ENCODE measurements at regions of chr22 and their contacts with region 1.

Region 1: GRCh38 chr22:28800308-28801077 is at the start of gene XBP1:
- DNase-seq: peak; percentile 87 to 93 (median 91)
- H3K4me3 ChIP-seq: peak within 1 kb of the TSS; percentile 83 to 92
- H3K4me3 Mint-ChIP-seq: peak within 1 kb of the TSS; percentile 89 to 99 (median 96)
- H3K27ac ChIP-seq: peak within 1 kb of the TSS; percentile 96
- H3K27ac Mint-ChIP-seq: peak within 1 kb of the TSS; percentile 89 to 100 (median 100)
- H3K4me1 ChIP-seq: peaks cover 53% of the 10 kb centered on the region
- H3K4me1 Mint-ChIP-seq: peaks cover 33 to 81% (median 49%) of the 10 kb centered on the region in 4 donors
- H3K27me3 ChIP-seq: no peaks in the 10 kb centered on the region
- H3K27me3 Mint-ChIP-seq: no peaks in the 10 kb centered on the region
- total RNA-seq, gene XBP1: 154 to 164 TPM

Region 2: GRCh38 chr22:28241656-28242290 is 558.7 kb before region 1 on chr22:
- CTCF ChIA-PET with region 1: no interaction called
- POLR2A ChIA-PET with region 1: no interaction called
- intact Hi-C with region 1: no loop called
- DNase-seq: no peak
- H3K4me3 ChIP-seq: no peak overlapping the region
- H3K4me3 Mint-ChIP-seq: no peak overlapping the region
- H3K27ac ChIP-seq: no peak overlapping the region
- H3K27ac Mint-ChIP-seq: no peak overlapping the region
- H3K4me1 ChIP-seq: no peaks in the 10 kb centered on the region
- H3K4me1 Mint-ChIP-seq: peaks cover 0 to 1% (median 0%) of the 10 kb centered on the region in 4 donors
- H3K27me3 ChIP-seq: no peaks in the 10 kb centered on the region
- H3K27me3 Mint-ChIP-seq: peaks cover 10 to 13% of the 10 kb centered on the region in 2 donors

Region 3: GRCh38 chr22:28741758-28742561 is 58.5 kb before region 1 on chr22 and contains the starts of genes CHEK2 and HSCB:
- CTCF ChIA-PET with region 1: no interaction called
- POLR2A ChIA-PET with region 1: interaction called, 30 read pairs
- intact Hi-C with region 1: loop called (anchors 1 kb)
- DNase-seq: peak; percentile 95 to 99 (median 96)
- H3K4me3 ChIP-seq: peak within 1 kb of the TSS; percentile 91 to 98
- H3K4me3 Mint-ChIP-seq: peak within 1 kb of the TSS; percentile 85 to 99 (median 89)
- H3K27ac ChIP-seq: peak within 1 kb of the TSS; percentile 92
- H3K27ac Mint-ChIP-seq: peak within 1 kb of the TSS; percentile 85 to 99 (median 90)
- H3K4me1 ChIP-seq: peaks cover 12% of the 10 kb centered on the region
- H3K4me1 Mint-ChIP-seq: peaks cover 17 to 34% (median 21%) of the 10 kb centered on the region in 4 donors
- H3K27me3 ChIP-seq: no peaks in the 10 kb centered on the region
- H3K27me3 Mint-ChIP-seq: no peaks in the 10 kb centered on the region
- total RNA-seq, gene CHEK2: 7.6 to 9.2 TPM
- total RNA-seq, gene HSCB: 9.3 to 11.1 TPM

Region 4: GRCh38 chr22:28772633-28773460 is 27.6 kb before region 1 on chr22 and contains the start of gene CCDC117:
- CTCF ChIA-PET with region 1: interaction called, 8 read pairs
- POLR2A ChIA-PET with region 1: interaction called, 51 read pairs
- intact Hi-C with region 1: loop called (anchors 1 kb)
- DNase-seq: peak; percentile 87 to 96 (median 88)
- H3K4me3 ChIP-seq: peak within 1 kb of the TSS; percentile 72 to 86
- H3K4me3 Mint-ChIP-seq: peak within 1 kb of the TSS; percentile 93 to 99 (median 96)
- H3K27ac ChIP-seq: peak within 1 kb of the TSS; percentile 84
- H3K27ac Mint-ChIP-seq: peak within 1 kb of the TSS; percentile 89 to 97 (median 94)
- H3K4me1 ChIP-seq: peaks cover 35% of the 10 kb centered on the region
- H3K4me1 Mint-ChIP-seq: peaks cover 17 to 36% (median 25%) of the 10 kb centered on the region in 4 donors
- H3K27me3 ChIP-seq: no peaks in the 10 kb centered on the region
- H3K27me3 Mint-ChIP-seq: no peaks in the 10 kb centered on the region
- total RNA-seq, gene CCDC117: 20.3 to 20.6 TPM

Region 5: GRCh38 chr22:28810821-28811491 is 10.5 kb after region 1 on chr22:
- CTCF ChIA-PET with region 1: interaction called, 24 read pairs
- POLR2A ChIA-PET with region 1: interaction called, 236 read pairs
- intact Hi-C with region 1: loop called (anchors 1 kb)
- DNase-seq: peak; percentile 49 to 63 (median 60)
- H3K4me3 ChIP-seq: peak overlapping the region in 1 of 2 donors; percentile 29
- H3K4me3 Mint-ChIP-seq: peak overlapping the region; percentile 72 to 88 (median 86)
- H3K27ac ChIP-seq: peak overlapping the region; percentile 31
- H3K27ac Mint-ChIP-seq: peak overlapping the region; percentile 83 to 94 (median 90)
- H3K4me1 ChIP-seq: peaks cover 77% of the 10 kb centered on the region
- H3K4me1 Mint-ChIP-seq: peaks cover 46 to 94% (median 70%) of the 10 kb centered on the region in 4 donors
- H3K27me3 ChIP-seq: no peaks in the 10 kb centered on the region
- H3K27me3 Mint-ChIP-seq: no peaks in the 10 kb centered on the region

Region 6: GRCh38 chr22:28817919-28818909 is 17.7 kb after region 1 on chr22:
- CTCF ChIA-PET with region 1: interaction called, 24 read pairs
- POLR2A ChIA-PET with region 1: interaction called, 236 read pairs
- intact Hi-C with region 1: loop called (anchors 2 kb)
- DNase-seq: peak in 1 of 5 donors; percentile 20
- H3K4me3 ChIP-seq: no peak overlapping the region
- H3K4me3 Mint-ChIP-seq: peak overlapping the region; percentile 20 to 78 (median 70)
- H3K27ac ChIP-seq: no peak overlapping the region
- H3K27ac Mint-ChIP-seq: peak overlapping the region; percentile 23 to 94 (median 74)
- H3K4me1 ChIP-seq: peaks cover 70% of the 10 kb centered on the region
- H3K4me1 Mint-ChIP-seq: peaks cover 45 to 85% (median 70%) of the 10 kb centered on the region in 4 donors
- H3K27me3 ChIP-seq: no peaks in the 10 kb centered on the region
- H3K27me3 Mint-ChIP-seq: no peaks in the 10 kb centered on the region

Region 7: GRCh38 chr22:28829358-28830181 is 29.1 kb after region 1 on chr22:
- CTCF ChIA-PET with region 1: interaction called, 59 read pairs
- POLR2A ChIA-PET with region 1: interaction called, 49 read pairs
- intact Hi-C with region 1: no loop called
- DNase-seq: peak; percentile 69 to 74 (median 71)
- H3K4me3 ChIP-seq: no peak overlapping the region
- H3K4me3 Mint-ChIP-seq: peak overlapping the region in 6 of 8 donors; percentile 33 to 78 (median 62)
- H3K27ac ChIP-seq: no peak overlapping the region
- H3K27ac Mint-ChIP-seq: peak overlapping the region in 5 of 7 donors; percentile 31 to 88 (median 75)
- H3K4me1 ChIP-seq: peaks cover 14% of the 10 kb centered on the region
- H3K4me1 Mint-ChIP-seq: peaks cover 11 to 43% (median 20%) of the 10 kb centered on the region in 4 donors
- H3K27me3 ChIP-seq: no peaks in the 10 kb centered on the region
- H3K27me3 Mint-ChIP-seq: no peaks in the 10 kb centered on the region

Region 8: GRCh38 chr22:28882878-28883656 is 82.6 kb after region 1 on chr22 and contains the start of gene ZNRF3:
- CTCF ChIA-PET with region 1: no interaction called
- POLR2A ChIA-PET with region 1: interaction called, 14 read pairs
- intact Hi-C with region 1: loop called (anchors 1 kb)
- DNase-seq: peak; percentile 86 to 90 (median 87)
- H3K4me3 ChIP-seq: peak within 1 kb of the TSS; percentile 61 to 83
- H3K4me3 Mint-ChIP-seq: peak within 1 kb of the TSS; percentile 88 to 92 (median 90)
- H3K27ac ChIP-seq: no peak within 1 kb of the TSS
- H3K27ac Mint-ChIP-seq: peak within 1 kb of the TSS; percentile 74 to 87 (median 81)
- H3K4me1 ChIP-seq: peaks cover 15% of the 10 kb centered on the region
- H3K4me1 Mint-ChIP-seq: peaks cover 9 to 32% (median 21%) of the 10 kb centered on the region in 4 donors
- H3K27me3 ChIP-seq: no peaks in the 10 kb centered on the region
- H3K27me3 Mint-ChIP-seq: peaks cover 5 to 7% of the 10 kb centered on the region in 2 donors
- total RNA-seq, gene ZNRF3: 0.70 to 0.89 TPM

Region 9: DNA sequence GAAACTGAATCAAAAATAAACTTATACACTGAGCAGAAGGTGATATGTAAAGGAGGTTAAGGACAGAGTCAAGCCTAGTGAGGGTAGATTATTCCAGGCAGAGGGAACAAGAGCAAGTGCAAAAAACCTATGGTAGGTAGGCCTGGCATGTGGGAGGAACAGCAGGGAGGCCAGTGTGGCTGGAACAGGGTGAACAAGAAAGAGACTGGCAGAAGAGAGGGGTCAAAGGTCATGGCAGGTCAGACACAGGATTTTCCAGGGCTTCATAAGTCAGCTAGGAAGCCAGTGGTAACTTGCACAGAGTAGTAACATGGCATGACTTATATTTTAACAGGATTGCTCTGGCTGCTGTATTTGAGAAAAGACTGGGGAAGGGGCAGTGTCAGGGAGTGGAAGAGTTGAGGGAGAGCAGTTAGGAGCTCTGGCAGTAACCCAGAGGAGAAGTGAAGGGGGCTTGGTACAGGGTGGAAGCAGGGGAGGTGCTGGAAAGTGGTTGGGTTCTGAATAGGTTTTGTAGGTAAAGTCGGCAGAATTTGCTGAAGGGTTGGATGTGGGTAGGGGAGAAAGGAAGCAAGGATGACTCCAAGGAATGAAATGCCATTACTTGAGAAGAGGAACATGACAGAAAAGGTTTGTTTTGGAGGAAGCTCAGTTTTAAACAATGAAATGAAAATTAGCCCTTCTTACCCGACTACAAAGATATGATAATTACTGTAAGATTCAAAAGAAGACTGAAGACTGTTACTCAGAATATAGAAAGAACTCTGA is 169.1 kb after region 1 on chr22:
- CTCF ChIA-PET with region 1: no interaction called
- POLR2A ChIA-PET with region 1: no interaction called
- intact Hi-C with region 1: no loop called
- DNase-seq: no peak
- H3K4me3 ChIP-seq: no peak overlapping the region
- H3K4me3 Mint-ChIP-seq: no peak overlapping the region
- H3K27ac ChIP-seq: no peak overlapping the region
- H3K27ac Mint-ChIP-seq: no peak overlapping the region
- H3K4me1 ChIP-seq: no peaks in the 10 kb centered on the region
- H3K4me1 Mint-ChIP-seq: no peaks in the 10 kb centered on the region
- H3K27me3 ChIP-seq: no peaks in the 10 kb centered on the region
- H3K27me3 Mint-ChIP-seq: peaks cover 6 to 10% of the 10 kb centered on the region in 2 donors

Measured in CD4-positive, alpha-beta memory T cell (primary cell).